Colonic mucosa (tissue), 4 donors: ENCODE measurements at regions of chr17 and their contacts with region 1.

Region 1: GRCh38 chr17:46841561-46842379 is 9.6 kb upstream of the WNT9B start:
- DNase-seq: no peak
- H3K4me3 ChIP-seq: no peak overlapping the region
- H3K27ac ChIP-seq: no peak overlapping the region
- H3K4me1 ChIP-seq: no peaks in the 10 kb centered on the region
- H3K27me3 ChIP-seq: peaks cover 7% of the 10 kb centered on the region
- CTCF ChIP-seq: peak; percentile 78

Region 2: GRCh38 chr17:46876353-46876887 is 34.6 kb after region 1 on chr17:
- intact Hi-C with region 1: loop called (anchors 5 kb)
- DNase-seq: peak; percentile 68
- H3K4me3 ChIP-seq: no peak overlapping the region
- H3K27ac ChIP-seq: no peak overlapping the region
- H3K4me1 ChIP-seq: no peaks in the 10 kb centered on the region
- H3K27me3 ChIP-seq: no peaks in the 10 kb centered on the region
- CTCF ChIP-seq: peak; percentile 53

Region 3: GRCh38 chr17:46894476-46895151 is 52.8 kb after region 1 on chr17:
- intact Hi-C with region 1: no loop called
- DNase-seq: no peak
- H3K4me3 ChIP-seq: no peak overlapping the region
- H3K27ac ChIP-seq: no peak overlapping the region
- H3K4me1 ChIP-seq: no peaks in the 10 kb centered on the region
- H3K27me3 ChIP-seq: no peaks in the 10 kb centered on the region
- CTCF ChIP-seq: no peak

Region 4: DNA sequence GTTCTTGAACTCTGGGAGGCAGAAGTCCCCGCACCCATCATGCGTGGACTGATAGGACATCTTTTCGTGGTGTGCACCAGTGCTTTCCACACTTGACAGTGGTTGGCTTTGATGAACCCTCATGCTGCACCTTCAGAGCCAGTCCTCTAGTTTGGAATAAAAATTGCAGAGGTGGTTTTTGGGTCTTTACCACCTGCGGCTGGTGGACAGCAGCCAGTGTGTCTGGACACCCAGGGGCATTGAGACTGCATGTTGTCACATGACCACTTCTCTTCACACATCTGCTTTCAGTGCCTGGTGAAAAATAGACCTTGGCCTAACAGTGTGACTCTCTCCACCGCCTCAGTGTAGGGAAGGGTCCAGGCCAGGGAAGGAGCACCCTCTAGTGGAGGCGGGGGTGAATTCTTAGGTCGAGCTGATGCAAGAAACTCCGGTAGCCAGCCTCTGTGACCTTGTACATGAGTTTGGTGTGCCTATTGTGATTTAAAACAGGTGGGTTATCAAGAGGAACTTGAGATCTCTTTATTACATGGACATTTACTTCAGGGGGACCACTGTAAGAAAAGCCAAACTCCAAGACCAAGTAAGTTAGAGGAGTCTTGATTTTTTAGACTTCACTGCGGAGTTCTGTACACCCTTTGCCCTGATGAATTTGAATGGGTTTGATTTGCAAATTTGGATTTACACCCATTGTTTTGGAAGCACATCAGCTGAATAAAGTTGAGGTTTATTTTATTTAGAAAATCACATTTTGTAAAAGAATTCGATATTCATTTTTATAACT is 99.0 kb after region 1 on chr17:
- intact Hi-C with region 1: loop called (anchors 5 kb)
- DNase-seq: peak; percentile 74
- H3K4me3 ChIP-seq: no peak overlapping the region
- H3K27ac ChIP-seq: no peak overlapping the region
- H3K4me1 ChIP-seq: no peaks in the 10 kb centered on the region
- H3K27me3 ChIP-seq: no peaks in the 10 kb centered on the region
- CTCF ChIP-seq: peak; percentile 80

Region 5: DNA sequence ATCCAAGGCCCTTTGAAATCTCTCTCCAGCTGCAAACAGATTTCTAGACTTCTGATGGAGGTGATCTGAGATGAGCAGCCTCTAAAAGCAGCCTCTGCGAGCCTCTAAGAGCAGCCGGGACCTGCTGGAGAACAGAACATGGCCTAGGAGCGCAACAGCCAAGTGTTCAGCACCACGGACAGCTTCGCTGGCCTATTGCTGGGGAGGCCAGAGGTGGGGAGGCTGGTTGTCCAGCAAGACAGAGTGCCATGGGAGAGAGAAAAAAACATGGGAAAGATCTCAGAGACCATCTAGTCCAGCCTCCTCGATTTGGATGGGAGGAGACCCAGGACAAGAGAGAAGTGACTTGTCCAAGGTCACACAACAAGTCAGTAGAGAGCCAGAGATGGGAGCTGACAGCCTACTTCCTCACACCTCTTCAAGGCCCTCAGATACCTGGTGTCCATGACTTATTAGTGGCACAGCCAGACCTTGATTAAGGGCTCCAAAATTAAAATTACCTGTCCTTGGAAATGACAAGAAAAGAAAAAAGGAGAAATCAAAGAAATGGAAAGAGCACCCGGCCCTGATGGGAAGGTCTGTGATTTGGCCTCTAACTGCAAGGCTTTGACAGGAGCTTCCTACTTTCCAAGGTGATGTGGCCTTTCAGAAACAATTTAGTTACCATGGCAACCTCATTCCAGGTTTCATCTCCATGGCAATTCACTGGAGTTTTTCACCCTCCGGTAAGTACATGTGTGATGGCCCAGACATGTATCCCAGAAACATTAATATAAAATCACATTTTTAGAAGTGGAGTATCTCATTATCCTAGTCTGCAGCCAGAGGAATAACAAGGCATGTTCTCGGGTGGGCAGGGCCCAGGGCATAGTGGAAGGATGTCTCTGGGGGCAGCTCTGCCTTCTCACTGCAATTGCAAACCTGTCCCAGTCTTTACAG is 122.8 kb after region 1 on chr17:
- intact Hi-C with region 1: no loop called
- DNase-seq: no peak
- H3K4me3 ChIP-seq: no peak overlapping the region
- H3K27ac ChIP-seq: no peak overlapping the region
- H3K4me1 ChIP-seq: no peaks in the 10 kb centered on the region
- H3K27me3 ChIP-seq: no peaks in the 10 kb centered on the region
- CTCF ChIP-seq: no peak

Region 6: DNA sequence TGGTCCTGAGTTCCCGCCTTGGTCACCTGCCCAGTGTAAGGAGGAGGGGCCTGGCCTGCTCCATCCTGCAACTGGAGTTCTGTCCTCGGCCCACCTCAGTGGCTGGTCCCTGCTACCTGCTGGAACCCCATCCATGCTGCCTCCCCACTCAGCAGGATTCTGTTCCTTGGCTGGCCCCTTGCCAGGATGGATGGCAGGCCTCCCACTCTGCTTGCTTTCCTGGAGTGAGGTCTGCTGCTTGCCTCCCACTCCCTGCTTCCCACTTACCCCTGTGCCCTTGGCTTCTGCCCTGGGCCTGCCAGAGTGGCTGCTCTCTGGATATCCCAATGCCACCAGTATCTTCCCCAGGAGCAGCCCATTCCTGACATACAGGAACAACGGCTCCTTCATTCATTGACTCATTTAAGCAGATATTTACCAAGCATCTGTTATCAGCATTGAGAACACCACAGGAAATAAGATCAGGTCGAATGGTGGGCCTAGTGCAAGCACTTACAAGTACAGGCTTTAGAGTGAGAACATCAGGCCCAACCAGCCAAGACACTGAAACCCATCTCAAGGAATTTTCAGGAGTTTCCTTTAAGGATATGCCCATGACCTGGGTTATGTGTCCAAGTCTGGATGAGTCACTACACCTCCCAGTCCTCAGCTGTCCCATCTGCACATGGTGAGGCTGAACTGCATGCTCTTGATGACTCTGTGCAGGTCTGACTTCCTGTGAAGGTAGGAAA is 154.2 kb after region 1 on chr17:
- intact Hi-C with region 1: loop called (anchors 5 kb)
- DNase-seq: no peak
- H3K4me3 ChIP-seq: no peak overlapping the region
- H3K27ac ChIP-seq: no peak overlapping the region
- H3K4me1 ChIP-seq: no peaks in the 10 kb centered on the region
- H3K27me3 ChIP-seq: no peaks in the 10 kb centered on the region
- CTCF ChIP-seq: no peak